Sigmoid colon (tissue), 7 donors: ENCODE measurements at regions of chr2 and their contacts with region 1.

Region 1: GRCh38 chr2:183078465-183079138 is at the start of gene DUSP19:
- DNase-seq: peak; percentile 93
- H3K4me3 ChIP-seq: peak within 1 kb of the TSS; percentile 56 to 83 (median 72)
- H3K27ac ChIP-seq: peak within 1 kb of the TSS; percentile 86 to 97 (median 90)
- H3K4me1 ChIP-seq: peaks cover 0 to 20% (median 9%) of the 10 kb centered on the region in 4 donors
- H3K27me3 ChIP-seq: no peaks in the 10 kb centered on the region
- CTCF ChIP-seq: no peak
- EP300 ChIP-seq: no peak
- POLR2A ChIP-seq: peak; percentile 70 to 88
- total RNA-seq, gene DUSP19: 4.2 to 7.2 (median 6.0) TPM

Region 2: GRCh38 chr2:182968493-182968892 is 110.1 kb before region 1 on chr2:
- intact Hi-C with region 1: no loop called
- DNase-seq: no peak
- H3K4me3 ChIP-seq: no peak overlapping the region
- H3K27ac ChIP-seq: no peak overlapping the region
- H3K4me1 ChIP-seq: peaks cover 0 to 6% (median 3%) of the 10 kb centered on the region in 4 donors
- H3K27me3 ChIP-seq: no peaks in the 10 kb centered on the region
- CTCF ChIP-seq: no peak
- EP300 ChIP-seq: no peak
- POLR2A ChIP-seq: no peak

Region 3: DNA sequence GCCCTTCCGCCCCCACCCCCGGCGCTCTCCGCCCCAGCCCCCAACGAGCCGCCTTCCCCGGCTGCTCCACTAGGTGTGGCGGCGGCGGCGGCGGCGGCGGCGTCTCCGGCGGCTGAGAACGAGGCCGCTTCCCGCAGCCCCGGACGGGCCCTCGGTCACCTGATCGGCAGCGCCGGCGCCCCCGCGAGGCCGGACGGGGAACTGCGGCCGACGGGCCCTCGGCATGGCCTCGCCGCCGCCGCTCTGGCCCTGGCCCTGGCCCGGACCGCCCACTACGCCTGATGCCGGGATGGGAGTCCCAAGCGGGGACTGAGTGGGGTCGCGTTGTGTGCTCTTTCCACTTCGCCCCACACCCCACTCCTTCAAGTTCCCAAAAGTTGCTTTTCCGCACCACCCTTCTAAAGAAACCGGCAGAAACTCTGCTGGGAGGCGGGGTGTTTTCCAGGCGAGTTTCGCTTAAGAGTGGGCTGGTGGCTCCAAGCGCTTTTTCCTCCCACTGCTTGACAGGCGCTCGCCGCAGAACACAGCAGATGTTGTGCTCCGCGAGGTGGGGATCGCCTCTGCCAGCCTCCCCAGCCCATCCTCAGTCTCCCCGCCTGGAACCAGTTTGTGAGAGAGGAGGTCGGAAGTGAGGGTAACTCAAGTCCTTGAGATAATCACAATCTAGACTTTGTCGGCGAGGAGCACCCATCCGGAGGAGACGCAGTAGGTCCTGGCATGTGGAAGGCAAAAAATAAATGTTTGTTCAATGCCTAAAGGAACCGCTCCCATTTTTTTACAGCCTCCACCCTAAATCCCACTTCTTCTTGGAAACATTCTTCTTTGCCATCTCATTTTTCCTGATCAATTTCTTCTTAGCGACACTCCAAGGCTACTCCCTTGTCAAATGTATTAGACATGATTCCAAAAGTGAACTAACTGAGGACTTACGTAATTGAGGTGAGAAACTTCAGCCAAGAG is 40.0 kb before region 1 on chr2 and contains the start of gene NCKAP1:
- intact Hi-C with region 1: loop called (anchors 1 kb)
- DNase-seq: peak; percentile 95
- H3K4me3 ChIP-seq: peak within 1 kb of the TSS; percentile 71 to 97 (median 88)
- H3K27ac ChIP-seq: peak within 1 kb of the TSS; percentile 96 to 99 (median 99)
- H3K4me1 ChIP-seq: peaks cover 0 to 43% (median 36%) of the 10 kb centered on the region in 4 donors
- H3K27me3 ChIP-seq: no peaks in the 10 kb centered on the region
- CTCF ChIP-seq: peak; percentile 28 to 97 (median 33)
- EP300 ChIP-seq: no peak
- POLR2A ChIP-seq: no peak
- total RNA-seq, gene NCKAP1: 160 to 206 (median 181) TPM